PC-9 (cell line): ENCODE measurements at regions of chr9 and their contacts with region 1.

Region 1: GRCh38 chr9:129006328-129007034 is 21.6 kb downstream of the SH3GLB2 start:
- DNase-seq: peak; percentile 58 to 77
- H3K4me3 ChIP-seq: no peak overlapping the region
- H3K27ac ChIP-seq: no peak overlapping the region
- H3K4me1 ChIP-seq: no peaks in the 10 kb centered on the region
- H3K27me3 ChIP-seq: no peaks in the 10 kb centered on the region
- CTCF ChIP-seq: peak; percentile 85

Region 2: DNA sequence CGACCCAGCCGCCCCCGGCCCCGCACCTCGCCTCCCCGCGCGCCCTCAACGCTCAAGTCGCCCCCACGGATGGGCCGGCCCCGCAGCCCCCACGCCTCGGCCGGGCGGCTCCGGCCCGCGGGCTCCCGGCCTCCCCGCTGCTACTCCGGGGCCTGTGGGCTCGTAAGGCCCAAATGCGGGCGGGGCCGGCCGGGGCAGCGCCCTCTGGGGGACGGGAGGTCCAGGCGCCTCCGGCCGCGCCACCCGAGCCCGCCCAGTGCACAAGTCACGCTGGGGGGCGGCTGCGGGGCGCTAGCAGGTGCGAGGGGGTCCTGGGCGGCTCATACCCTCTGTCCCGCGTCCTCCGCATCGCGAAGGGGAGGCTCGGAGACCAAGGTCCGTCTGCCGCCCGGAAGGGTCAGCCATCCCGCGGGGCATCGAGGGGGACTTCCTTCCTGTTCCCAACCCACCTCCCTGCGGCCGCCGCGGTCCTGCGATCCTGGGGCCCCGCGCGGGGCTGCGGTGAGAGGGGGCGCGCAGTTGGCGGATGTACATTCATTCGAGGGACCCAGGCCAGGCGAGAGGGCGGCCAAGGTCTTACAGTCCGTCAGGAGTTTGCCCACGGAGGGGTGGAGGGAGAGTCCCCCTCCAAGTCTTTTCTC is 815.0 kb before region 1 on chr9 and contains the start of gene CIZ1:
- CTCF ChIA-PET with region 1: no interaction called
- POLR2A ChIA-PET with region 1: no interaction called
- intact Hi-C with region 1: no loop called
- DNase-seq: peak; percentile 46 to 83
- H3K4me3 ChIP-seq: peak within 1 kb of the TSS; percentile 83
- H3K27ac ChIP-seq: peak within 1 kb of the TSS; percentile 77
- H3K4me1 ChIP-seq: peaks cover 16% of the 10 kb centered on the region
- H3K27me3 ChIP-seq: no peaks in the 10 kb centered on the region
- CTCF ChIP-seq: peak; percentile 65
- total RNA-seq, gene CIZ1: 164 and 213 TPM in 2 replicates

Region 3: GRCh38 chr9:129023036-129023907 is 16.8 kb after region 1 on chr9:
- CTCF ChIA-PET with region 1: interaction called, 11 read pairs
- POLR2A ChIA-PET with region 1: no interaction called
- intact Hi-C with region 1: loop called (anchors 1 kb)
- DNase-seq: peak; percentile 85 to 92
- H3K4me3 ChIP-seq: no peak overlapping the region
- H3K27ac ChIP-seq: peak overlapping the region; percentile 51
- H3K4me1 ChIP-seq: peaks cover 51% of the 10 kb centered on the region
- H3K27me3 ChIP-seq: no peaks in the 10 kb centered on the region
- CTCF ChIP-seq: no peak

Region 4: GRCh38 chr9:129102901-129103594 is 96.6 kb after region 1 on chr9:
- CTCF ChIA-PET with region 1: no interaction called
- POLR2A ChIA-PET with region 1: no interaction called
- intact Hi-C with region 1: loop called (anchors 5 kb)
- DNase-seq: peak; percentile 60 to 77
- H3K4me3 ChIP-seq: no peak overlapping the region
- H3K27ac ChIP-seq: no peak overlapping the region
- H3K4me1 ChIP-seq: peaks cover 21% of the 10 kb centered on the region
- H3K27me3 ChIP-seq: no peaks in the 10 kb centered on the region
- CTCF ChIP-seq: peak; percentile 65

Region 5: DNA sequence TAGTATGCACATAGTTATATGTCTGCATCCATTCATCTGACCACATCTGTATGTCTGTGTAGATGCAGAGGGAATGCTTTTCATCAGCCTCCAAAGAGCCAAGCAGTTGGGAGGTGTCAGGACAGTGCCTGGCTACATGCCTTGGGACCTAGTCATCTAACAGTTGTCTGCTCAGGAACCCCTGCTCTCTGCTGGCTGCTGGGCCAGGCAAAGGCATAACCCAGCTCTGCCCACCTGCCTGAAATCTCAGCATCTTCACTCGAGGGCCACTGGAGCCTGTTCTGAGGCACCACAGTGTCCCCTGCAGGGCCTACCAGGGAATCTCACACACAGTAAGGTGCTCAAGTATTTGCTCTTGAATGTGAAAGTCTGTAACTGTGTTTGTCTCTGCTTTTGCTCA is 610.7 kb after region 1 on chr9:
- CTCF ChIA-PET with region 1: no interaction called
- POLR2A ChIA-PET with region 1: no interaction called
- intact Hi-C with region 1: loop called (anchors 2 kb)
- DNase-seq: peak; percentile 56 to 71
- H3K4me3 ChIP-seq: no peak overlapping the region
- H3K27ac ChIP-seq: no peak overlapping the region
- H3K4me1 ChIP-seq: peaks cover 14% of the 10 kb centered on the region; the same call in 1 of the 2 replicates
- H3K27me3 ChIP-seq: no peaks in the 10 kb centered on the region
- CTCF ChIP-seq: peak; percentile 72